ENCODE measurements at regions of chr7 and their contacts with region 1.

Region 1: GRCh38 chr7:95686109-95686508 is 86.2 kb upstream of the DYNC1I1 start:
- DNase-seq: peak; percentile 46 to 60
- ATAC-seq: peak; percentile 67 to 80 (median 74)
- H3K4me3 ChIP-seq: no peak overlapping the region
- H3K27ac ChIP-seq: no peak overlapping the region
- H3K4me1 ChIP-seq: peaks cover 37% of the 10 kb centered on the region
- H3K27me3 ChIP-seq: no peaks in the 10 kb centered on the region
- CTCF ChIP-seq: peak; percentile 58

Region 2: GRCh38 chr7:95511716-95512260 is 174.3 kb before region 1 on chr7:
- intact Hi-C with region 1: loop called (anchors 5 kb)
- DNase-seq: peak; percentile 55 to 63
- ATAC-seq: peak; percentile 85 to 96 (median 92)
- H3K4me3 ChIP-seq: peak overlapping the region; percentile 35
- H3K27ac ChIP-seq: peak overlapping the region; percentile 39
- H3K4me1 ChIP-seq: no peaks in the 10 kb centered on the region
- H3K27me3 ChIP-seq: no peaks in the 10 kb centered on the region
- CTCF ChIP-seq: peak; percentile 92

Region 3: GRCh38 chr7:95527033-95527775 is 158.9 kb before region 1 on chr7:
- intact Hi-C with region 1: loop called (anchors 1 to 5 kb)
- DNase-seq: peak in 1 of 2 donors; percentile 67
- ATAC-seq: peak; percentile 88 to 96 (median 94)
- H3K4me3 ChIP-seq: no peak overlapping the region
- H3K27ac ChIP-seq: no peak overlapping the region
- H3K4me1 ChIP-seq: peaks cover 19% of the 10 kb centered on the region
- H3K27me3 ChIP-seq: no peaks in the 10 kb centered on the region
- CTCF ChIP-seq: peak; percentile 96

Region 4: DNA sequence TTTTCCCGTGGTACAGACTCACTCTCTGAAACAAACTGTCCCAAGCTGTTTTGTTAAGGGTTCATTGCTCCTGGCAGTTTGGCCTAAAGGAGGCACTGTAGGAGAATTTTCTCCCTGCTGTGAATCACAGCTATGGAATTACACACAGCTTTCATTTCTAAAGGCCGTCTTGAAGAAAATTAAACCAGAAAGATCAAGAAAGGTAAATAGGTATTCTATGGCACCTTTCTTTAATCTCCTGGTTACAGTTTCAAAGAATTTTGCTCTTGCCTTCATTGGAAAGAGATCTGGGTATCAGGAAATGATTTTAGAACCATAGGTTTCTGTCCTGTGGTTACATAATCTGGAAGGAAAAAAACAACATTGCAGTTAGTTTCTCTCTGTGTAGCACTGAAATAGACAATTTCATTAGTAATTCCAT is 141.0 kb before region 1 on chr7:
- intact Hi-C with region 1: loop called in 1 of 2 experiments (anchors 5 kb)
- DNase-seq: no peak
- ATAC-seq: peak; percentile 65 to 77 (median 66)
- H3K4me3 ChIP-seq: peak overlapping the region; percentile 59
- H3K27ac ChIP-seq: peak overlapping the region; percentile 97
- H3K4me1 ChIP-seq: peaks cover 53% of the 10 kb centered on the region
- H3K27me3 ChIP-seq: no peaks in the 10 kb centered on the region
- CTCF ChIP-seq: peak; percentile 71

Region 5: GRCh38 chr7:95608359-95609173 is 77.5 kb before region 1 on chr7:
- intact Hi-C with region 1: loop called (anchors 5 kb)
- DNase-seq: peak; percentile 93 to 96
- ATAC-seq: peak; percentile 96 to 98 (median 98)
- H3K4me3 ChIP-seq: peak overlapping the region; percentile 40
- H3K27ac ChIP-seq: peak overlapping the region; percentile 88
- H3K4me1 ChIP-seq: peaks cover 24% of the 10 kb centered on the region
- H3K27me3 ChIP-seq: no peaks in the 10 kb centered on the region
- CTCF ChIP-seq: no peak

Measured in psoas muscle (tissue), 8 donors.